Esophagus muscularis mucosa (tissue), 4 donors: ENCODE measurements at regions of chr3 and their contacts with region 1.

Region 1: GRCh38 chr3:50192689-50193141 is 1.3 kb downstream of the GNAT1 start:
- DNase-seq: peak; percentile 95
- H3K4me3 ChIP-seq: no peak overlapping the region
- H3K27ac ChIP-seq: no peak overlapping the region
- H3K4me1 ChIP-seq: peaks cover 18 to 32% (median 30%) of the 10 kb centered on the region in 4 donors
- H3K27me3 ChIP-seq: peaks cover 6 to 50% (median 27%) of the 10 kb centered on the region in 4 donors
- CTCF ChIP-seq: peak; percentile 88 to 90 (median 89)
- EP300 ChIP-seq: no peak
- POLR2A ChIP-seq: no peak

Region 2: DNA sequence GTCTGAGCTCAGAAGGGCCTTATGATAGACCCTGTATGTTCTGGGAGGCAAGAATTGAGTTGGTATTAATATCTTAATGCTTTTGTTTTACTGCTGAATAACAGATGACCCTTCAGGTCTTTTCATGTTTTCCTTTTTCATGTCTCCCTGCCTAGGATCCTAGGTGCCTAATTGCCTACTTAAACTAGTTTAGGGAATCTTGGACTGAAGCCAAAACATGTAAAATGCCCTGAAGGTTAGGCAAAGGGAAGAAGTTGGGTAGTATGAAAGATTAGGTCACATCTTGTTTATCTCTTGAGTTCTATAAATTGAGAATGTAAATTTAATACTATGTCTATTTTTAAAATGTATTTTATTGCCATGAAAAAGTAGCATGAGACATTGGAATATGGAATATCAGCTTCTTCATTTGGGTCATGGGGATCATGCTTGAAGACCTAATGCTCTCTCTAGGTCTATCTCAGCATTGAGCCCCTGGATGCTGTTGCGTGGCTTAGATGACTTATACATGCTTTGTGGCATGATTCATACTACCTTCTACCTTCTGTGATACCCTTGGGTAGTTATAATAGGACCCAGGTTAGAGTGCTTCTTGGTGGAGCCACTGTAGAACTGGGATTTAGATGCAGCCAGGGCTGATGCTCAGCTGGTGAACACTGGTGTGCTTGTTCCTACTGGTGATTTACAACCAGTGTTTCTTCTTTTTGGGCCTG is 226.3 kb before region 1 on chr3:
- intact Hi-C with region 1: no loop called
- DNase-seq: no peak
- H3K4me3 ChIP-seq: no peak overlapping the region
- H3K27ac ChIP-seq: peak overlapping the region in 2 of 4 donors; percentile 15 to 58
- H3K4me1 ChIP-seq: peaks cover 21 to 48% (median 44%) of the 10 kb centered on the region in 4 donors
- H3K27me3 ChIP-seq: no peaks in the 10 kb centered on the region
- CTCF ChIP-seq: no peak
- EP300 ChIP-seq: no peak
- POLR2A ChIP-seq: no peak

Region 3: DNA sequence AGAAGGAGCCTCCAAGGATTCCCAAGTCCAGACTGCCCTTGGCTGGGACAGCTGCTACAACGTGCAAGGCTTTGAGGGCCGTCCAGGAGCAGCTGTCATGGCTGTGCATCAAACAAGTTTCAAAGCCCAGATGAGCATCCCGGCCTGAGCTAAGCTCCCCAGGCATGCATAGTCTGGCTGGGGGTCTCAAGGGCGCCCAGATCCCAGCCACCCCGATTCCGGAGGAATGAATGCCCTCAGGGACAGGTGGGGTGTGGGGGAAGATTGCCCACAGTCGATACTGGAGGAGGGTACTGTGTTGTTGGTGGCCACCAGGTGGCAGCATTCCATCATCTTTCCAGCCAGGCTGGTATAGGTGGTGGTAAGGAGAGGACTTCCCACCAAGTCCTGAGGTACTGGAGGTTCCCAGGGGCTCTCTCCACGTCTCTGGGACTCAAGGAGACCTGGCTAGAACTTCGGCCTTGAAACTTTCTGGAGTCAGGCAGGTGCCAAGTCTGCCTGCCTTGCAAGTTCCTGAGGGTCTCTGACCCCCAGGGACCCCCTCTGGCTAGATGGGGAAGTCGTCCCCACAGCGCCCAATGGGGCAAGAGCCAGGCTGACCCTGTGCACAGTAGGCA is 71.2 kb before region 1 on chr3:
- intact Hi-C with region 1: loop called (anchors 1 kb)
- DNase-seq: no peak
- H3K4me3 ChIP-seq: no peak overlapping the region
- H3K27ac ChIP-seq: no peak overlapping the region
- H3K4me1 ChIP-seq: peaks cover 27 to 40% (median 39%) of the 10 kb centered on the region in 4 donors
- H3K27me3 ChIP-seq: peaks cover 0 to 8% (median 0%) of the 10 kb centered on the region in 4 donors
- CTCF ChIP-seq: peak; percentile 84 to 85 (median 85)
- EP300 ChIP-seq: no peak
- POLR2A ChIP-seq: no peak

Region 4: DNA sequence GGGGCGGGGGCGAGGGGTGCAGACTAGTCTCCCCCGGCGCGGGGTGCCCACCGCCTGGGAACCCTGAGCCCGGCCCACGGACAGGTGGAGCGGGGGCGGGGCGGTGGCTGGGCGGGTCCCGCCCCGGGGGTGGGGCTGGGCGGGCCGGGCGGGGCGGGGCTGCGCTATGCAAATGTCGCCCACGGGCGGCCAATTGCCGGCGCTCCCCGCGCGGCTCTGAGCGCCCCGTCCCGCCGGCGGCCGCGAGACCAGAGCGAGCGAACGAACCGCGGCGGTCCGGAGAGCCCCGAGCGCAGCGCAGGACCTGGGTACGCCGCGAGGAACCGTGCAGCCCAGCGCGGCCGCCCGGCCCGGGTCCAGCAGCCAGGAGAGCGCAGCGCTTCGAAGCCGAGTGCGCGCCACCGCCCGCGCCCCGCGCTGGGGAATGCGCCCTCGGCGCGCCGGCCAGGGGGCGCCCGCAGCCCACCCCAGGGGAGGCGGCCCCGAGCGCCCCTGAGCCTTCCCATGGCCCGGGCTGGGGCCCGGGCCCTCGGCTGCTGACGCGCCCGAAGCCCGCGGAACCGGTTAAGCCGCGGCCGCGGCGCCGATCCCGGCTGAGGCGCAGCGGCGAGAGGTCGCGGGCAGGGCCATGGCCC is 37.8 kb before region 1 on chr3 and contains the start of gene SEMA3F:
- intact Hi-C with region 1: loop called (anchors 2 kb)
- DNase-seq: no peak
- H3K4me3 ChIP-seq: peak within 1 kb of the TSS; percentile 59 to 78 (median 68)
- H3K27ac ChIP-seq: peak within 1 kb of the TSS; percentile 78 to 85 (median 79)
- H3K4me1 ChIP-seq: peaks cover 19 to 59% (median 55%) of the 10 kb centered on the region in 4 donors
- H3K27me3 ChIP-seq: peaks cover 0 to 8% (median 6%) of the 10 kb centered on the region in 4 donors
- CTCF ChIP-seq: peak in 2 of 3 experiments; percentile 31 to 50
- EP300 ChIP-seq: no peak
- POLR2A ChIP-seq: no peak
- total RNA-seq, gene SEMA3F: 11.9 to 46.5 (median 23.3) TPM

Region 5: DNA sequence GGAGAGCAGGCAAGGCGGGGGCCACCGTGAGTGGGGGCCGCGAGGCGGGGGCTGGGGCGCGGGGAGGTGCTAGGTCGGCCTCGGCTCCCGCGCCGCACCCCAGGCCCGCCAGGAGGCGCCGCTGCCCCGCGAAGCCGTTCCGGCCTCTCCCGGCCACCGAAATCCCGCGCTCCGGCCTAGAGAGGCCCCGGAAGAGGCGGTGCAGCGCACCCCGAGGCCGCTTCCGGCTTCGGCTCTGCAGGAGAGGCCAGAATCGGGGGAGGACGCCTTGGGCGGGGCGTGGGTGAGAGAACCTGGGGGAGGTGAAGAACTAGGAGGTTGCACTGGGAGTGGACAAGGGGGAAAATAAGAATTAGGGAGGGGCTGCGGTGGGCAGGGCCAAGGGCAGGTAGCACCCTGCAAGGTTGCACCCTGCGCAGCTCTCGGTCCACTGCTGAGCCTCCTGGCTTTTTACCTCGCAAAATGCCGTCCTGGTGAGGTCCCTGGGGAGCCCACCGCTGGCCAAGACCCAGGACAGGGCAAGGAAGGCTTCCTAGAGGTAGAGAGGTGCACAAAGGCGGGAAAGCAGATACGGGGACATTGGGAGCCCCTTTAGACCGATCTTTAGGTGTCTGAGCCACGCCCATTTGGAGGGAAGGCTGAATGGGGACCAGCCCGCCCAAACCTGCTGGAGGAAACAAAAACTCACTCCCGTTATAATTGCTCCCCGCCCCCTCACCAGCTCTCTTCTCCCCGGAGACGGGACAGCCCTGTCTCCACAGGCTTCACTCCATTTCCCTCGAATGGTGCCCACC is 34.9 kb after region 1 on chr3:
- intact Hi-C with region 1: loop called (anchors 1 kb)
- DNase-seq: peak; percentile 95
- H3K4me3 ChIP-seq: peak overlapping the region; percentile 55 to 75 (median 65)
- H3K27ac ChIP-seq: peak overlapping the region; percentile 57 to 73 (median 62)
- H3K4me1 ChIP-seq: peaks cover 17 to 28% (median 27%) of the 10 kb centered on the region in 4 donors
- H3K27me3 ChIP-seq: peaks cover 0 to 7% (median 0%) of the 10 kb centered on the region in 4 donors
- CTCF ChIP-seq: peak; percentile 96 to 97 (median 97)
- EP300 ChIP-seq: no peak
- POLR2A ChIP-seq: no peak

Region 6: DNA sequence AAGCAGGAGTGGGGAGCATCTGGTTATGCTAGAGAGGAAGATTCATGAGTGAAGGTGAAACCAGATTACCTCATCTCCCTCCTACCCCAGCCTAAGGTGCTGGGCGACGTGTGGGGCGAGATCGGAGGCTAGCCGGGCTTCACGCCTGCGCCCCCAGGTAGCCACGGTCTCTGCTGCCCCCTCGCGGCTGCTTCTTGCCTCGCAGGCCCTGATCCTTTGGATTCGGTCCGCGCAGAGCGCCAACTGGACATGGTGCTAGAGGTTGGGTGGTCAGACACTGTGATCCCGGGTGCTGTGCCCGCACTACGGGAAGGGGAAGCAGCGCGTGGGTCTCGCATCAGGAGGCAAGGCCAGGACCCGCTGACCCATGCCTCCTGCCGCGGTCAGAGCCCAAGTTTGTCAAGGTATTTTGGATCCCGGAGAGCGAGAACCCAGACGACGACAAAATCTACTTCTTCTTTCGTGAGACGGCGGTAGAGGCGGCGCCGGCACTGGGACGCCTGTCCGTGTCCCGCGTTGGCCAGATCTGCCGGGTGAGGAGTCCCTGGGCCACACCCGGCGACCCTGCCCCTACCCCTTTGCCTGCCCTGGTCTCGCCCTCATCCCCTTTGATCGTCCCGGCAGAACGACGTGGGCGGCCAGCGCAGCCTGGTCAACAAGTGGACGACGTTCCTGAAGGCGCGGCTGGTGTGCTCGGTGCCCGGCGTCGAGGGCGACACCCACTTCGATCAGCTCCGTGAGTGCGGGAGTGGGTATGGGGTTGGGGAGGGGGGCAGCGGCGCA is 80.4 kb after region 1 on chr3:
- intact Hi-C with region 1: loop called (anchors 5 kb)
- DNase-seq: no peak
- H3K4me3 ChIP-seq: peak overlapping the region; percentile 39 to 57 (median 42)
- H3K27ac ChIP-seq: peak overlapping the region in 3 of 4 donors; percentile 19 to 56 (median 32)
- H3K4me1 ChIP-seq: peaks cover 35 to 72% (median 57%) of the 10 kb centered on the region in 4 donors
- H3K27me3 ChIP-seq: peaks cover 0 to 40% (median 5%) of the 10 kb centered on the region in 4 donors
- CTCF ChIP-seq: peak; percentile 97 to 99 (median 98)
- EP300 ChIP-seq: no peak
- POLR2A ChIP-seq: no peak

Region 7: GRCh38 chr3:50568947-50569749 is 376.4 kb after region 1 on chr3 and contains the start of gene HEMK1:
- intact Hi-C with region 1: no loop called
- DNase-seq: peak; percentile 100
- H3K4me3 ChIP-seq: peak within 1 kb of the TSS; percentile 64 to 89 (median 82)
- H3K27ac ChIP-seq: peak within 1 kb of the TSS; percentile 82 to 92 (median 90)
- H3K4me1 ChIP-seq: peaks cover 24 to 61% (median 50%) of the 10 kb centered on the region in 4 donors
- H3K27me3 ChIP-seq: no peaks in the 10 kb centered on the region
- CTCF ChIP-seq: peak in 1 of 3 experiments; percentile 11
- EP300 ChIP-seq: no peak
- POLR2A ChIP-seq: peak; percentile 48
- total RNA-seq, gene HEMK1: 4.6 to 10.6 (median 6.3) TPM